GM12878 (cell line): ENCODE measurements at regions of chr15 and their contacts with region 1.

Region 1: GRCh38 chr15:38354315-38354929 is 99.5 kb upstream of the FAM98B start:
- DNase-seq: peak; percentile 31
- ATAC-seq: peak; percentile 86
- H3K4me3 ChIP-seq: no peak overlapping the region
- H3K27ac ChIP-seq: no peak overlapping the region
- H3K4me1 ChIP-seq: no peaks in the 10 kb centered on the region
- H3K27me3 ChIP-seq: no peaks in the 10 kb centered on the region
- CTCF ChIP-seq: peak; percentile 73 to 89 (median 80); a peak in 4 of 6 replicates
- EP300 ChIP-seq: no peak
- POLR2A ChIP-seq: no peak
- RAD21 ChIP-seq: peak; percentile 98

Region 2: GRCh38 chr15:37837276-37837675 is 517.1 kb before region 1 on chr15:
- CTCF ChIA-PET with region 1: no interaction called
- POLR2A ChIA-PET with region 1: no interaction called
- RAD21 ChIA-PET with region 1: no interaction called
- SMC1A ChIA-PET with region 1: no interaction called
- in situ Hi-C with region 1: no loop called
- intact Hi-C with region 1: no loop called
- DNase-seq: no peak
- ATAC-seq: no peak
- H3K4me3 ChIP-seq: no peak overlapping the region
- H3K27ac ChIP-seq: no peak overlapping the region
- H3K4me1 ChIP-seq: no peaks in the 10 kb centered on the region
- H3K27me3 ChIP-seq: no peaks in the 10 kb centered on the region
- CTCF ChIP-seq: no peak
- EP300 ChIP-seq: no peak
- POLR2A ChIP-seq: no peak
- RAD21 ChIP-seq: no peak

Region 3: GRCh38 chr15:38252481-38253412 is 101.7 kb before region 1 on chr15 and contains the start of gene SPRED1:
- CTCF ChIA-PET with region 1: interaction called, 23 read pairs
- POLR2A ChIA-PET with region 1: no interaction called
- RAD21 ChIA-PET with region 1: interaction called, 5 read pairs
- SMC1A ChIA-PET with region 1: interaction called, 7 read pairs
- in situ Hi-C with region 1: no loop called
- intact Hi-C with region 1: loop called (anchors 5 kb)
- DNase-seq: no peak
- ATAC-seq: peak; percentile 57
- H3K4me3 ChIP-seq: peak within 1 kb of the TSS; percentile 94
- H3K27ac ChIP-seq: peak within 1 kb of the TSS; percentile 62
- H3K4me1 ChIP-seq: peaks cover 3% of the 10 kb centered on the region; the same call in 1 of the 2 replicates
- H3K27me3 ChIP-seq: no peaks in the 10 kb centered on the region; a peak in 2 of 4 replicates
- CTCF ChIP-seq: no peak
- EP300 ChIP-seq: no peak
- POLR2A ChIP-seq: no peak
- RAD21 ChIP-seq: no peak
- polyA plus RNA-seq, gene SPRED1: 0.08 to 0.13 TPM

Region 4: GRCh38 chr15:38300395-38300794 is 54.0 kb before region 1 on chr15:
- CTCF ChIA-PET with region 1: interaction called, 3 read pairs
- POLR2A ChIA-PET with region 1: no interaction called
- RAD21 ChIA-PET with region 1: no interaction called
- SMC1A ChIA-PET with region 1: no interaction called
- in situ Hi-C with region 1: no loop called
- intact Hi-C with region 1: loop called (anchors 5 kb)
- DNase-seq: no peak
- ATAC-seq: peak; percentile 55
- H3K4me3 ChIP-seq: peak overlapping the region; percentile 23; the same call in 1 of the 2 replicates
- H3K27ac ChIP-seq: no peak overlapping the region
- H3K4me1 ChIP-seq: peaks cover 8% of the 10 kb centered on the region
- H3K27me3 ChIP-seq: no peaks in the 10 kb centered on the region
- CTCF ChIP-seq: no peak
- EP300 ChIP-seq: 0 out of 4 replicates have a peak, but pooled peaks of 1 of the 2 experiments have one; percentile 27
- POLR2A ChIP-seq: no peak
- RAD21 ChIP-seq: no peak

Region 5: DNA sequence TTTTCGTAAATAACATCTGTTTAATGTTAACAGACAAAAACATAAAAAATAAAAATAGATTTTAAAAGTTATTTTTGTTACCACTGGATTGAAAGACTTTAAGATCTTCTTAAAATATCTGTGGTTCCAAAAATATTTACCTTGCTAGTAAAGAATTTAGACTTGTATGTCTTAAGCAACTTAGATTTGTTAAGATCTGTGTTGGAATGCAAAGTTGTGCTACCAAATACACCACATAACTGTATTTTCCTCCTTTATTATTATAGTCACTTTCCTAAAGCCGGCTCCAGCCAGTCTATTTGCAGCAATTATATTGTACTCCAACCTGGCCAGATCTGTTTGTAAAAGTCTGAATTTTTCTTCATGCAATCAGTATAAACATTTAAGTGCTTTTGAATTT is 38.1 kb before region 1 on chr15:
- CTCF ChIA-PET with region 1: no interaction called
- POLR2A ChIA-PET with region 1: no interaction called
- RAD21 ChIA-PET with region 1: no interaction called
- SMC1A ChIA-PET with region 1: no interaction called
- in situ Hi-C with region 1: no loop called
- intact Hi-C with region 1: loop called (anchors 5 kb)
- DNase-seq: no peak
- ATAC-seq: no peak
- H3K4me3 ChIP-seq: no peak overlapping the region
- H3K27ac ChIP-seq: no peak overlapping the region
- H3K4me1 ChIP-seq: no peaks in the 10 kb centered on the region
- H3K27me3 ChIP-seq: no peaks in the 10 kb centered on the region
- CTCF ChIP-seq: no peak
- EP300 ChIP-seq: no peak
- POLR2A ChIP-seq: no peak
- RAD21 ChIP-seq: no peak

Region 6: GRCh38 chr15:38389924-38390542 is 35.6 kb after region 1 on chr15:
- CTCF ChIA-PET with region 1: interaction called, 34 read pairs
- POLR2A ChIA-PET with region 1: no interaction called
- RAD21 ChIA-PET with region 1: interaction called, 7 read pairs
- SMC1A ChIA-PET with region 1: interaction called, 6 read pairs
- in situ Hi-C with region 1: no loop called
- intact Hi-C with region 1: no loop called
- DNase-seq: peak; percentile 15
- ATAC-seq: peak; percentile 91
- H3K4me3 ChIP-seq: no peak overlapping the region
- H3K27ac ChIP-seq: no peak overlapping the region
- H3K4me1 ChIP-seq: no peaks in the 10 kb centered on the region
- H3K27me3 ChIP-seq: no peaks in the 10 kb centered on the region
- CTCF ChIP-seq: peak; percentile 80 to 88 (median 83)
- EP300 ChIP-seq: no peak
- POLR2A ChIP-seq: no peak
- RAD21 ChIP-seq: peak; percentile 79